Activated naive CD4-positive, alpha-beta T cell treated with anti-CD3 and anti-CD28 coated beads for 36 hours (primary cell): ENCODE measurements at regions of chr1 and their contacts with region 1.

Region 1: GRCh38 chr1:150979092-150980056 is 2.7 kb upstream of the ANXA9 start:
- DNase-seq: peak; percentile 94
- H3K4me3 Mint-ChIP-seq: peak overlapping the region; percentile 43
- H3K27ac Mint-ChIP-seq: peak overlapping the region; percentile 53
- H3K4me1 Mint-ChIP-seq: peaks cover 39% of the 10 kb centered on the region
- H3K27me3 Mint-ChIP-seq: no peaks in the 10 kb centered on the region

Region 2: DNA sequence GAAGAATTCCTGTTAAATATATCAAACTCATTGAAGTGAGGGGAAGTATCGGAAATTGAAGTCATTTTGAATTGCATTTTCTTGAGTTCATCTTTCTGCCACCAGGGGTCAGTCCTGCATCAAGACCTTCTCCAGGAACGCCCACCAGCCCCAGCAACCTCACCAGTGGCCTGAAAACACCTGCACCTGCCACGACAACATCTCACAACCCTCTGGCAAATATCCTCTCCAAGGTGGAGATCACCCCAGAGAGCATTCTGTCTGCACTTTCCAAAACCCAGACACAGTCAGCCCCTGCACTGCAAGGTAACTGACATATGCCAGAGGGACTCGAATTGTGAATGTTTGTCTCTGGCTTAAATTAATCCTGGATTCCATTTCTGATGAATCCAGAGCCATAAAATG is 515.0 kb before region 1 on chr1:
- CTCF ChIA-PET with region 1: no interaction called
- intact Hi-C with region 1: loop called (anchors 1 kb)
- DNase-seq: peak; percentile 79
- H3K4me3 Mint-ChIP-seq: no peak overlapping the region
- H3K27ac Mint-ChIP-seq: peak overlapping the region; percentile 41
- H3K4me1 Mint-ChIP-seq: peaks cover 2% of the 10 kb centered on the region
- H3K27me3 Mint-ChIP-seq: no peaks in the 10 kb centered on the region

Region 3: DNA sequence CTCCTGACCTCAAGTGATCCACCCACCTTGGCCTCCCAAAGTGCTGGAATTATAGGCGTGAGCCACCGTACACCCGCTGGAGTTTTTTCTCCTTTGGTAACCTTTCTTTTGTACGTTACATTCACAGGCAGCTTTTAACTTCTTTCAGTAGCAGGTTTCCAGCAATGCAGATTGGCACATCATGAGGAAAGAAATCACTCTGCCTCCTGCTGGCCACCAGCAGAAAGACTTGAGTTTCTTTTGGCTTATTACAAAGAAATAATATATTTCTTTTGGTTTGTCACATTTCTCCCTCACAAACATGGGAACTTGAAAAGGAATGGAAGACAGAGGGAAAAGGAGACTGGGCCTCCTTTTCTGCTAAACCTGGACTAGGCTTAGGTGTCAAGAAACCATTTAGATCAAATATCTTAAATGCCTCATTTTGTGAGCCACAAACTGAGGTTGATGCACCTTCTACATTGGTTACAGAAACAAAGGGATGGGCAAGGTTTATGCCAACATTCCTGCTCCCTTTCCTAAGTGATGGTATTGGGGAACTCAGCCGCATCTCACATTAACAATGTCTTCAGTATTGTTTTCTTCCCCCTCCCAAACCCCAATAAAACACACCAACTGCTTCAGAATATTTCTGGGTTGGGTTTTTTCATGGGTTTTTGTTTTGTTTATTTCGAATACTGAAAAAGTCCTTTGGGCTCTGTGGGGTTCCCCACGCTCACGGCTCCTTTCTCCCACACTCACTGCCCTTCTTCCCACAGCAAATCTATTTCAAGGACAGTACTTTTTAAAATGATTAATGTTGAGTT is 357.7 kb before region 1 on chr1:
- CTCF ChIA-PET with region 1: no interaction called
- intact Hi-C with region 1: loop called (anchors 2 kb)
- DNase-seq: peak; percentile 78
- H3K4me3 Mint-ChIP-seq: peak overlapping the region; percentile 9
- H3K27ac Mint-ChIP-seq: peak overlapping the region; percentile 72
- H3K4me1 Mint-ChIP-seq: peaks cover 74% of the 10 kb centered on the region
- H3K27me3 Mint-ChIP-seq: no peaks in the 10 kb centered on the region

Region 4: GRCh38 chr1:150765296-150765976 is 213.9 kb before region 1 on chr1 and contains the start of gene CTSS:
- CTCF ChIA-PET with region 1: no interaction called
- intact Hi-C with region 1: loop called (anchors 5 kb)
- DNase-seq: no peak
- H3K4me3 Mint-ChIP-seq: peak within 1 kb of the TSS; percentile 90
- H3K27ac Mint-ChIP-seq: peak within 1 kb of the TSS; percentile 94
- H3K4me1 Mint-ChIP-seq: peaks cover 48% of the 10 kb centered on the region
- H3K27me3 Mint-ChIP-seq: no peaks in the 10 kb centered on the region
- total RNA-seq, gene CTSS: 37.0 to 37.7 TPM

Region 5: DNA sequence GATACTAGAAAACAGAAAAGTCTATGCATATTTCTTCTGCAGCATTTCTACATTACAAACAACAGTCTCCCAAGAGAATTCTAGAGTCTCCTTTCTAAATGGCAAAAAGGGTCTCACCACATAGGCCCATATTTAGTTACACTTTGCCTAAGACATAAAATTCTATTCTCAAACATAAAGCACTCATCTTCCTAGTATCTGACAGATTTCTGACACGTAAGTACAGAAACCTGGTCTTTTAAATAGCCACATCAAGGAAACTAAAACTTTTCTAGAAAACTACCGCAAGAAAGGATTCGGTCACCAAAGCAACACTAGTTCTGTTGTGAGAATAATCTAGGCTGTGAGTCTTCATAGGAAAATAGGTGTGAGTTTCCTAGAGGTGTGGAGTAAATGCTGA is 137.7 kb before region 1 on chr1:
- CTCF ChIA-PET with region 1: no interaction called
- intact Hi-C with region 1: loop called (anchors 5 kb)
- DNase-seq: no peak
- H3K4me3 Mint-ChIP-seq: no peak overlapping the region
- H3K27ac Mint-ChIP-seq: no peak overlapping the region
- H3K4me1 Mint-ChIP-seq: peaks cover 35% of the 10 kb centered on the region
- H3K27me3 Mint-ChIP-seq: no peaks in the 10 kb centered on the region

Region 6: GRCh38 chr1:150876119-150876454 is 103.3 kb before region 1 on chr1:
- CTCF ChIA-PET with region 1: no interaction called
- intact Hi-C with region 1: loop called (anchors 5 kb)
- DNase-seq: peak; percentile 58
- H3K4me3 Mint-ChIP-seq: peak overlapping the region; percentile 83
- H3K27ac Mint-ChIP-seq: peak overlapping the region; percentile 83
- H3K4me1 Mint-ChIP-seq: peaks cover 18% of the 10 kb centered on the region
- H3K27me3 Mint-ChIP-seq: no peaks in the 10 kb centered on the region

Region 7: GRCh38 chr1:150995896-150996295 is 16.5 kb after region 1 on chr1:
- CTCF ChIA-PET with region 1: interaction called, 171 read pairs
- intact Hi-C with region 1: loop called (anchors 1 kb)
- DNase-seq: peak; percentile 36
- H3K4me3 Mint-ChIP-seq: no peak overlapping the region
- H3K27ac Mint-ChIP-seq: peak overlapping the region; percentile 41
- H3K4me1 Mint-ChIP-seq: peaks cover 25% of the 10 kb centered on the region
- H3K27me3 Mint-ChIP-seq: no peaks in the 10 kb centered on the region